HCT116 (cell line): ENCODE measurements at regions of chr3 and their contacts with region 1.

Region 1: DNA sequence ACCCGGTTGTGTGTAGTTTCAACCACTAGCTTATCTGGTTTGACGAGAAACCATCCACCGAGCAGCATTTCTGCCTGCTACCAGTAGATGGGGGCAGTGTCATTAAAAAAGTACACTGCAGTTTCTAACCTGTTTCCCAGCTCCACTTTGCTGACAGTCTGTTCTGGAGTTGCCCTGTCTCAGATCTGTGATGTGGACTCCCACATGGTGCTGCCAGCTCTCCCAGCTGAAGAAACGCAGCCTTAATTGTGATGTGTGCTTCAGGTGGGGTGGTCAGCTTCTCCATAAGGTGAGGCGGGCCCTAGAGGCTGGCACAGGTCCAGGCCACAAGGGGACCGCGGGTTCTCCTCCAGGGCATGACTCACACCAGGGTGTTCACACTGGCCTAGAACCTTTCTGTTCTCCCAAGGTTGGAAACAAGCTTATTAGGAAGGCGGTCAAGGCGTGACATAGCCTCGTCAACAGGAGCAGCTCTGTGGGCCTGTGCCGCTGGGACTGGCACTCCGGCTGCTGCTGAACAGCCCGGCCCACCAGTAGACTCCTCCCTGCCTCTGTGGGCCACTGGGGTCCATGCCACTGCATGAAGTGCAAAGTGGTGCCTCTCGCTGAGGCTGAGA is 2.9 kb upstream of the FAM43A start:
- DNase-seq: peak; percentile 88
- ATAC-seq: peak; percentile 78
- H3K4me3 ChIP-seq: peak overlapping the region; percentile 10 to 41; a peak in 2 of 4 replicates
- H3K27ac ChIP-seq: peak overlapping the region; percentile 20
- H3K4me1 ChIP-seq: peaks cover 16 to 29% of the 10 kb centered on the region in 2 experiments
- H3K27me3 ChIP-seq: no peaks in the 10 kb centered on the region
- CTCF ChIP-seq: peak; percentile 76 to 98 (median 92)
- POLR2A ChIP-seq: no peak
- RAD21 ChIP-seq: peak; percentile 99

Region 2: GRCh38 chr3:194740859-194741491 is 58.2 kb after region 1 on chr3:
- CTCF ChIA-PET with region 1: no interaction called
- POLR2A ChIA-PET with region 1: interaction called, 4 read pairs
- RAD21 ChIA-PET with region 1: interaction called in 1 of 2 experiments, 4 read pairs
- intact Hi-C with region 1: loop called (anchors 2 kb)
- DNase-seq: peak; percentile 91
- ATAC-seq: peak; percentile 86
- H3K4me3 ChIP-seq: peak overlapping the region; percentile 28 to 56
- H3K27ac ChIP-seq: peak overlapping the region; percentile 67
- H3K4me1 ChIP-seq: peaks cover 21 to 45% of the 10 kb centered on the region in 2 experiments
- H3K27me3 ChIP-seq: peaks cover 8% of the 10 kb centered on the region; the same call in 1 of the 2 replicates
- CTCF ChIP-seq: no peak
- POLR2A ChIP-seq: no peak
- RAD21 ChIP-seq: no peak

Region 3: GRCh38 chr3:195001961-195002861 is 319.4 kb after region 1 on chr3:
- CTCF ChIA-PET with region 1: interaction called, 5 read pairs
- POLR2A ChIA-PET with region 1: no interaction called
- RAD21 ChIA-PET with region 1: no interaction called
- intact Hi-C with region 1: loop called (anchors 1 kb)
- DNase-seq: peak; percentile 37
- ATAC-seq: peak; percentile 93
- H3K4me3 ChIP-seq: no peak overlapping the region
- H3K27ac ChIP-seq: no peak overlapping the region
- H3K4me1 ChIP-seq: peaks cover 0 to 9% of the 10 kb centered on the region in 2 experiments; a peak in 1 of 4 replicates
- H3K27me3 ChIP-seq: peaks cover 34% of the 10 kb centered on the region; the same call in 1 of the 2 replicates
- CTCF ChIP-seq: peak; percentile 68 to 76 (median 71); a peak in 5 of 6 replicates
- POLR2A ChIP-seq: no peak
- RAD21 ChIP-seq: peak; percentile 84

Region 4: DNA sequence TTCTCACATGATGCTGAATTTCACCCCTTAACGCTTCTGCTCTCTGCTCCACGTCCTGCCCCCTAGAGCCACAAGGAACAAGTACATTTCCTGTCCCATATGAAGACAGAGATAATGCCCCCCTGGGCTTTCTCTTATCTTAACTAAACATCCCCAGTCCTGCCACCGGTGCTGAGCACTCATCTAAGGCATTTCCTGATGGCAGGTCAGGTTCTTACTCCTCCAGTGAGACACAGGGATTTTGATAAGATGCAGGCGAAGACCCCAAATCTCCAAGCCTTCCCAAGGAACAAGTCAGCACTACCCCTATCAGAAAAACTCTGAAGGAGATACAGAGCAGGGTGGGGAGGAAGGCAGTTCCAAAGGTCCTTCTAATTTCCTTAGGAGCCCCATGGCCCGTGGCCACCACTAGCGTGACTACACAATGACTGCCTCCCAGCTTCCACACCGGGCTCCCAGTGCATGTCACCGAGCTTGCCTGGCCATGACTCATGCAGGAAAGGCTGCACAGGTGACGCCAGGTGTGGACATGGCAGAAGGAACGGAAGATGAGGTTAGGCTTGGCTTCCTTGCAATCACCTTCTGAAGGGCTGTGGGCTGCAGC is 435.3 kb after region 1 on chr3:
- CTCF ChIA-PET with region 1: interaction called, 22 read pairs
- POLR2A ChIA-PET with region 1: interaction called, 3 read pairs
- RAD21 ChIA-PET with region 1: interaction called, 5 read pairs
- intact Hi-C with region 1: no loop called
- DNase-seq: peak; percentile 77
- ATAC-seq: peak; percentile 80
- H3K4me3 ChIP-seq: peak overlapping the region; percentile 20 to 47
- H3K27ac ChIP-seq: peak overlapping the region; percentile 57
- H3K4me1 ChIP-seq: peaks cover 30 to 44% of the 10 kb centered on the region in 2 experiments
- H3K27me3 ChIP-seq: no peaks in the 10 kb centered on the region
- CTCF ChIP-seq: peak in 2 of 3 experiments; percentile 54 to 58; a peak in 4 of 6 replicates
- POLR2A ChIP-seq: no peak
- RAD21 ChIP-seq: peak; percentile 7; the same call in 1 of the 2 replicates

Region 5: GRCh38 chr3:195271116-195271858 is 588.5 kb after region 1 on chr3 and contains the start of gene XXYLT1:
- CTCF ChIA-PET with region 1: interaction called, 28 read pairs
- POLR2A ChIA-PET with region 1: interaction called, 7 read pairs
- RAD21 ChIA-PET with region 1: interaction called, 6 read pairs
- intact Hi-C with region 1: no loop called
- DNase-seq: peak; percentile 74
- ATAC-seq: peak; percentile 81
- H3K4me3 ChIP-seq: peak within 1 kb of the TSS; percentile 63 to 74
- H3K27ac ChIP-seq: peak within 1 kb of the TSS; percentile 77
- H3K4me1 ChIP-seq: peaks cover 12 to 25% of the 10 kb centered on the region in 2 experiments
- H3K27me3 ChIP-seq: no peaks in the 10 kb centered on the region
- CTCF ChIP-seq: peak; percentile 87 to 100 (median 93)
- POLR2A ChIP-seq: no peak
- RAD21 ChIP-seq: peak; percentile 100
- total RNA-seq, gene XXYLT1: 10.9 TPM